KBM-7 (cell line): ENCODE measurements at regions of chr12 and their contacts with region 1.

Region 1: DNA sequence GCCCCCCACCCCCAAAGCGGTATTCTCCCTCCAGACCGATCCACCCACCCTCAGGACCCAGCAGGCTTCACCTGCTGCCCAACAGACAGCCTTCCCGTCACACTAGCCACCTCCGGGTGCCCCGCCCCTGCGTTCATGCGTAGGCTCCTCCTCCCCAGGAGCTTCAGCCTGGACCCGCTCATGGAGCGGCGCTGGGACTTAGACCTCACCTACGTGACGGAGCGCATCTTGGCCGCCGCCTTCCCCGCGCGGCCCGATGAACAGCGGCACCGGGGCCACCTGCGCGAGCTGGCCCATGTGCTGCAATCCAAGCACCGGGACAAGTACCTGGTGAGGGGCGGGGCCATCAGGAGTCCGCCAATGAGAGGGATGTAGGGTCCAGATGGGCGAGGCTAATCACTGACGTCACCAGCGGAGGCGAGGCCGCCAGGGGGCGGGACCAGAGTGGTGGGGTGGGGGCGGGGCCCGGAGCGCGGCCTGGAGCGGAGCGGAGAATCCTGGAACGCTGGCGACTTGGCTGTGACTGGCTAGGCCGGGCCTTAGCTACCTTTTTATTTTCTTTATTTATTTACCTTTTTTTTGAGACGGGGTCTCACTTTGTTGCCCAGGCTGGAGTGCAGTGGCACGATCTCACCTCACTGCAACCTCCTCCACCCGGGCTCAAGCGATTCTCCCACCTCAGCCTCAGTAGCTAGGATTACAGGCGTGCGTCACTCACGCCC is 4.4 kb downstream of the TNS2 start:
- DNase-seq: peak; percentile 91

Region 2: DNA sequence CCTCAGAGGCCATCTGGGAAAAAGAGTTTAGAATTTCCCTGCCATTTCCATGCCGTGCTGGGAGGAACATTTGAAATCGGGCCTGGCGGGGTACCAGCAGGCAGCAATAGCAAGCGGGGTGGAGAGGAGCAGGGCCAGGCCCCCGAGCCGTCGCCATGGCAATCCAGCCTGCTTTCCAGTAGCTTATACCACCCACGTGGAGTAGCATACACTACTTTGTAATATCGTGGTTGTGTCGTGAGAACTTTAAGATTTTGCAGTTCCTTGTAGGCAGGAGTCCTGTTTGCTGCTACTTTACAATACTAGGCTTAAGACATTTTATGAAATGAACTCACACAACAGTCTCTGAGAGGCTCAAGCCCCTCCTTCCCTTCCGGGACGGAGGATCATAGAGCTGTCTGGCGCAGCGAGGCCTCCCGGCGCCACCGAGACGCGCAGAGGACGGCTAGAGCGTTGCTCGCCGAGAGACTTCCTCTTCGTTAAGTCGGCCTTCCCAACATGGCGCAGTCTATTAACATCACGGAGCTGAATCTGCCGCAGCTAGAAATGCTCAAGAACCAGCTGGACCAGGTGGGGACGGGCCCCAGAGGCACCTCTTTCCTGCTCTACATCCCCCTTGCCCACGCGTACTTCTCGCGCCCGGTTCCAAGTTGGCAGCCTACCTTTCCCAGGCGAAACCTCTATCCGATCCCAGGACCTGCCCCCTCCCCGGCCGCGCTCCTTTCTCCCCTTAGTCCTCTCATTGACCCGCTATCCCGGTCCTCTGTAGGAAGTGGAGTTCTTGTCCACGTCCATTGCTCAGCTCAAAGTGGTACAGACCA is 241.0 kb after region 1 on chr12 and contains the start of gene PFDN5:
- in situ Hi-C with region 1: loop called (anchors 25 kb)
- DNase-seq: peak; percentile 89